Heart right ventricle (tissue), 16 donors: ENCODE measurements at regions of chr9 and their contacts with region 1.

Region 1: GRCh38 chr9:84711902-84712301 is 42.4 kb downstream of the NTRK2 start:
- DNase-seq: peak in 1 of 2 donors; percentile 14
- ATAC-seq: peak in 3 of 8 donors; percentile 24 to 55 (median 28)
- H3K4me3 ChIP-seq: no peak overlapping the region
- H3K27ac ChIP-seq: no peak overlapping the region
- H3K4me1 ChIP-seq: peaks cover 0 to 9% (median 3%) of the 10 kb centered on the region in 9 donors
- H3K27me3 ChIP-seq: no peaks in the 10 kb centered on the region
- CTCF ChIP-seq: no peak

Region 2: DNA sequence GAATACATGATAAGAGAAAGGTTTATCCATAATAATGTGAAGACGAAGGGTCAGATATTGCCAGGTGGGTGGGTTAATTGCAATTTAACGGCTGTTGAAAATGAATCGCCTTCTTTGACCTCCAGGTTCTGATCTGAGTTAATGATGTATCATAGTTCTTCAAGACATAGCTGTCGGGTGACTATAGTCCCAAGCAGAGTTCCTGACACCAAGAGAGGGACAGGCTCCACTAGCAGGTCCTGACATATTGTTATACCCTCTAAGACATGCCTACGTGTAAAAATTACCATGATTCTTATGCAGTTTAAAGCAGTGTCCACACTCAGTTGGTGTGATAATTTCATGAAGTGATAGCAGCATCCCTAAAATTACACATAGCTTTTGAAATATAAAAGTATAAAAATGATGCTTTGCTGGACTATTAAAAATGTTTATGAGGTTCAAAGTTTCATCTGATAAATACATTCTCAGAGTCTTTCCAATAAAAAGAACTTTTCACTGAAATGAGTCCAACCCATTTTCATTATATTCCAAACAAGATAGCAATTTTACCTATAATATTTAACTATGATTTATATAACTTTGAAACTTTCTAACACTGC is 10.6 kb after region 1 on chr9:
- intact Hi-C with region 1: loop called in 1 of 10 experiments (anchors 2 kb)
- DNase-seq: no peak
- ATAC-seq: no peak
- H3K4me3 ChIP-seq: no peak overlapping the region
- H3K27ac ChIP-seq: no peak overlapping the region
- H3K4me1 ChIP-seq: no peaks in the 10 kb centered on the region
- H3K27me3 ChIP-seq: peaks cover 0 to 4% (median 0%) of the 10 kb centered on the region in 7 donors
- CTCF ChIP-seq: no peak

Region 3: DNA sequence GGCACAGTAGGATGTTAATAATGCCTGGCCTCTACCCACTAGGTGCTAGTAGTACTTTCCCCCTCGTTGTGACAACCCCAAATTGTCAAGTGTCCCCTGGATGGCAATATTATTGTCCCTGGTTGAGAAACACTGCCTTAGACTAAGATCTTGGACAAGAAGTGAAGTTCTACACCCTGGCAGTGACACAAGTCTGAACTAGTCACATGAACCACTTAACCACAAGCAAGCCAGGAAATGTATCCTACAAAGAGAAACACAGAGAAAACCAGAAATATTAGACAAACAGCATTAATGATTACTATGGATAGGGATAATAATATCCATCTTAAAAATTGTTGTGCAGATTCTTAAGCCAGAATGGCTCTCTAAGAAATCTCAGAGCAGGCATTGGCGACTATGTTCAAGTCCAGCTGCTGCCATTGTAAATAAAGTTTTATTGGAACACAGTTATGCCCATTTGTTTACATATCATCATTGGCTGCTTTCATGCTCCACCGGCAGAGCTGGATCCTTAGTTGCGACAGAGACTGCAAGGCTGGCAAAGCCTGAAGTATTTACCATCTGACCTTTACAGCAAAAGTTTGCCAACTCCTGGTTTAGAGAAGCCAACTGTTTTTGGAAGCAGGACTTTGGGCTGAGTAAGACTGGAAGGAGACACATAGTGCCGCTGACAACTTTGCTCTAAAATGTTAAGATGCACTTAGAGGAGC is 38.4 kb after region 1 on chr9:
- intact Hi-C with region 1: no loop called
- DNase-seq: no peak
- ATAC-seq: no peak
- H3K4me3 ChIP-seq: no peak overlapping the region
- H3K27ac ChIP-seq: no peak overlapping the region
- H3K4me1 ChIP-seq: peaks cover 0 to 27% (median 4%) of the 10 kb centered on the region in 9 donors
- H3K27me3 ChIP-seq: no peaks in the 10 kb centered on the region
- CTCF ChIP-seq: no peak

Region 4: DNA sequence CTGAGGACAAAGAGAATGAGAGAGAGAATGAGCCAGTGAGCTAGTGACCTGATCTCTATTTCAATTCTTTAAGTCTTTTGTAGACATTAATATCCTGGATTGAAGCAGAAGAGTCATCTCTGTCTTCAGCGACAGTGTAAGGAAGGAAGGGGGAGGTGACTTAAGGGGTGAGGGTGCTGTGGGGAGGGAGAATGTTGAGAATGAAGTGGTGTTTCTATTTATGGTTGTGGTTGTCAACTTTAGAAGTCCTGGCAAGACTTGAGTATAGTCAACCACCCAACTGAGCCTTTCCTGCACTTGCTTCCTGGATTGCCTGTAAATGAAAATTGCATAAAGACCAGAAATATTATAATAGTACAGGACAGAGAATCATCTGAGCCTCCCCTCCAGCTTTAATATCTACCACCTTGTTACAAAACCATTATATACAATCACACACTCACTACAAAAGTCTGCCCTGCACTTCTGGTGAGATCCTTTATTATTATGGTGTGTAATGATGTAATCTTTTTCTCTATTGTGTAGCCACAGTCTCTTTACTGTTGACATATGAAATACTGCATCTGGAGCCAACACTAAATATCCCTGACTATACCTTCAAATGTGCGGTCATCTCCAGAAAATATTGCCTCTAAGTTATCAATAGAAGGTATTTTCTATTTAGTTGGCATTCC is 49.4 kb after region 1 on chr9:
- intact Hi-C with region 1: loop called in 1 of 10 experiments (anchors 10 kb)
- DNase-seq: no peak
- ATAC-seq: no peak
- H3K4me3 ChIP-seq: no peak overlapping the region
- H3K27ac ChIP-seq: no peak overlapping the region
- H3K4me1 ChIP-seq: peaks cover 0 to 12% (median 4%) of the 10 kb centered on the region in 9 donors
- H3K27me3 ChIP-seq: no peaks in the 10 kb centered on the region
- CTCF ChIP-seq: no peak